H1 (cell line): ENCODE measurements at regions of chr19 and their contacts with region 1.

Region 1: DNA sequence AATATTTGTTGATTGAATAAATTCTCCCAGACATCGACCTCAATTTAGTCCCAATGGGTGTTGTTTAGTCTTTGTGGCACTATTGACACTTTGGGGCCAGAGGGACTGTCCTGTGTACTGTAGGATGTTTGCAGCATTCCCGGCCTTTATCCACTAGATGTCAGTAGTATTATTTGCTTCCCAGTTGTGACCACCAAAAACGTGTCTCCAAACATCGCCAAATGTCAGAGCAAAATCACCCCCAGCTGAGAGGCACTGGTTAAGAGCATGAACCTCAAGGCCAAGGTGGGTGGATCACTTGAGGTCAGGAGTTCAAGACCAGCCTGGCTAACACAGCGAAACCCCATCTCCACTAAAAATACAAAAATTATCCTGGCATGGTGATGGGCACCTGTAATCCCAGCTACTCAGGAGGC is 15.4 kb downstream of the NLRP12 start:
- DNase-seq: no peak
- H3K4me3 ChIP-seq: no peak overlapping the region
- H3K27ac ChIP-seq: no peak overlapping the region
- H3K4me1 ChIP-seq: no peaks in the 10 kb centered on the region; a peak in 1 of 7 replicates
- H3K27me3 ChIP-seq: peaks cover 0 to 5% (median 1%) of the 10 kb centered on the region in 4 experiments; a peak in 4 of 7 replicates
- CTCF ChIP-seq: peak in 2 of 3 experiments; percentile 68 to 77; a peak in 3 of 4 replicates
- EP300 ChIP-seq: no peak
- POLR2A ChIP-seq: no peak
- RAD21 ChIP-seq: peak; percentile 84 to 87

Region 2: DNA sequence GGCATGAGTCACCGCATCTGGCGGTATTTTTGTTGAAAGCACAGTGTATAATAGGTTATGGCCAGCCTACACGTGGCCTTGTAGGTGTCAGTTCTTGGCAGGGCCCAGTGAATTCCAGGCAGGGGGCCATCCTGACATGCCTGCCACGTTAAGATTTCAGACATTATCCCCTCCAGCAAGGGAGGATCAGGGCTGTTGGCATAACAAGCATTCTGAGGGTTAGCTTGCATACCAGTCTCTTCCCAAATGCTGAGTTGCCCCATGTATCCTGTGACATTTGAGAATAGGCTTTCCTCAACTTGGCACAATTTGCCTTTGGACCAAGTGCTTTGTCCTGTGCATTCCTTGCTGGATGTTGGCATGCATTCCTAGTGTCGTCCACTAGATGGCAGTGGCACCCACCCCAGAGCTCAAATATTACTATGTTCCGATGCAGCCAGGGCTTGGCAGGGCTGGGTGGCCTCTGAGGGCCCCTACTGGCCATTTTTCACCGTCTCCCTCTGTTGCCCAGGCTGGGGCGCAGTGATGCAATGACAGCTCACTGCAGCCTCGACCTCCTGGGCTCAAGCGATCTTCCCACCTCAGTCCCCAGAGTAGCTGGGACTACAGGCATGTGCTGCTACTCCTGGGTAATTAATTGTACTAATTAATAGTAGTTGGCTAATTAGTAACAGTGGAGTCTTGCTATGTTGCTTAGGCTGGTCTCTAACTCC is 15.8 kb before region 1 on chr19:
- CTCF ChIA-PET with region 1: interaction called, 35 read pairs
- POLR2A ChIA-PET with region 1: interaction called, 5 read pairs
- DNase-seq: peak; percentile 88 to 94
- H3K4me3 ChIP-seq: no peak overlapping the region
- H3K27ac ChIP-seq: no peak overlapping the region
- H3K4me1 ChIP-seq: no peaks in the 10 kb centered on the region
- H3K27me3 ChIP-seq: no peaks in the 10 kb centered on the region
- CTCF ChIP-seq: peak; percentile 83 to 99 (median 99)
- EP300 ChIP-seq: no peak
- POLR2A ChIP-seq: no peak
- RAD21 ChIP-seq: peak; percentile 91

Region 3: GRCh38 chr19:53849237-53849676 is 40.5 kb after region 1 on chr19:
- CTCF ChIA-PET with region 1: interaction called, 24 read pairs
- POLR2A ChIA-PET with region 1: no interaction called
- DNase-seq: no peak
- H3K4me3 ChIP-seq: no peak overlapping the region
- H3K27ac ChIP-seq: no peak overlapping the region
- H3K4me1 ChIP-seq: 0 out of 7 replicates have a peak, but pooled peaks cover 0 to 2% (median 0%) of the 10 kb centered on the region in 4 experiments
- H3K27me3 ChIP-seq: no peaks in the 10 kb centered on the region
- CTCF ChIP-seq: no peak
- EP300 ChIP-seq: no peak
- POLR2A ChIP-seq: no peak
- RAD21 ChIP-seq: no peak

Region 4: GRCh38 chr19:53942001-53942786 is 133.5 kb after region 1 on chr19:
- CTCF ChIA-PET with region 1: interaction called, 12 read pairs
- POLR2A ChIA-PET with region 1: no interaction called
- DNase-seq: peak; percentile 97 to 100
- H3K4me3 ChIP-seq: peak overlapping the region; percentile 76 to 95 (median 88)
- H3K27ac ChIP-seq: peak overlapping the region; percentile 63; the same call in 1 of the 2 replicates
- H3K4me1 ChIP-seq: peaks cover 4 to 10% (median 7%) of the 10 kb centered on the region in 4 experiments; a peak in 6 of 7 replicates
- H3K27me3 ChIP-seq: no peaks in the 10 kb centered on the region
- CTCF ChIP-seq: peak; percentile 60 to 86 (median 82)
- EP300 ChIP-seq: no peak
- POLR2A ChIP-seq: peak; percentile 55 to 88
- RAD21 ChIP-seq: peak; percentile 46 to 65